Colonic mucosa (tissue), 4 donors: ENCODE measurements at regions of chr1 and their contacts with region 1.

Region 1: DNA sequence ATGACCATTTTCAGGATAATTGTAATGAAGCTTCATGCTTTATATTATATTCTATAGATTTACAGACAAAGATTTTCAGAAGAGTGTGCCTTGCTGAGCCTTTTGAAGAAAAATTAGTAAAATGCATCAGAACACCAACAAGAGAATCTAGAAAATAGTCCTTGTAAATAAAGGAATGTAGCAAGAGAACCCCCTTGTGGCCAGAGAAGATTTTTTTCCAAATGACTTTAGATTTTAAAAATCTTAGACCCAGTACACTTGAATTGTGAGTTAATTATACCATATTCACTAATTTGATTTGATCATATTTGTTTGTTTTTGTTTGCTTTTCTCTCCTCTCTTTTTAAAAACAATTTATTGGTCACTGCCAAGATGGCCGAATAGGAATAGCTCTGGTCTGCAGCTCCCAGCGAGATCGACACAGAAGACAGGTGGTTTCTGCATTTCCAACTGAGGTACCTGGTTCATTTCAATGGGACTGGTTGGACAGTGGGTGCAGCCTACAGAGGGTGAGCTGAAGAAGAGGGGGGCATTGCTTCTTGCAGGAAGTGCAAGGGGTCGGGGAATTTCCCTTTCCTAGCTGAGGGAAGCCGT is 12.8 kb upstream of the IFI44L start:
- DNase-seq: no peak
- H3K4me3 ChIP-seq: no peak overlapping the region
- H3K27ac ChIP-seq: no peak overlapping the region
- H3K4me1 ChIP-seq: no peaks in the 10 kb centered on the region
- H3K27me3 ChIP-seq: no peaks in the 10 kb centered on the region
- CTCF ChIP-seq: peak; percentile 36

Region 2: DNA sequence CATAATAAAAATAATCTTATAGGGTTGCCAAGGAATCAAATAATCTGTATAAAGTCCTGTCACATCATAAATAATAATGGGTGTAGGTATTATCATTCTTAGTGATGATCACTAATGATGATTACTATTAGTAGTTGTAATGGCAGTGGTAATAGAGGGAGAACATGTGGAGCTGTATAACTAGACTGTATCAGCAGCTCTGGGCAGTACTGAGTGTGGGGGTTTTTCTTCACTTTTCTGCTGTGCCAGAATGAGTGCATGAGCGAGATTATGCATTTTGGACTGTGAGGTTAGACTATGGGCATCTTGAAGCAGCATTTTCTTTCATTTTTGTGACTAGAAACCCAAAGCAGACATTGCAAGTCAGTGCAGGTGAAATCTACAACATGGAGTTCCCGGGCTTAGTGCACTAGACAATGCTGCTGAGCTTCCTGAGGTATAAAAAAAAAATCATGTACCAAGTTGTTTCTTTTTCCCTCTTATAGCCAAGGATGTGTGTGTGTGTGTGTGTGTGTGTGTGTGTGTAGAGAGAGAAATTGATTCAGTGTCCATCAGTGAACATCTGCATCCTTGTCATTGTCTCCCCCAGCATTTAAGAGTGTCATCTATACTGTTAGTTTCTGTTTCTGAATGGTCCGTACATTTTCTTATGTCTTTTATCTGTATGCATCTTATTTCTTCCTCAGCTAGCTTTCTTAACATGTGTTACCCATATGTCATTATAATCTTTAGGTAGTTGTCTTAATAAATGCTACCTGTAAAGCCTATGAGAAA is 475.1 kb before region 1 on chr1:
- intact Hi-C with region 1: loop called (anchors 5 kb)
- DNase-seq: no peak
- H3K4me3 ChIP-seq: no peak overlapping the region
- H3K27ac ChIP-seq: no peak overlapping the region
- H3K4me1 ChIP-seq: no peaks in the 10 kb centered on the region
- H3K27me3 ChIP-seq: no peaks in the 10 kb centered on the region
- CTCF ChIP-seq: no peak

Region 3: GRCh38 chr1:78586572-78586971 is 20.9 kb before region 1 on chr1:
- intact Hi-C with region 1: no loop called
- DNase-seq: no peak
- H3K4me3 ChIP-seq: no peak overlapping the region
- H3K27ac ChIP-seq: no peak overlapping the region
- H3K4me1 ChIP-seq: no peaks in the 10 kb centered on the region
- H3K27me3 ChIP-seq: no peaks in the 10 kb centered on the region
- CTCF ChIP-seq: no peak